ENCODE measurements at regions of chr15 and their contacts with region 1.

Region 1: GRCh38 chr15:90482124-90483011 is 47.4 kb upstream of the CRTC3 start:
- DNase-seq: peak in 7 of 9 donors; percentile 28 to 60 (median 47)
- ATAC-seq: peak; percentile 61
- H3K4me3 ChIP-seq: no peak overlapping the region
- H3K4me3 Mint-ChIP-seq: no peak overlapping the region
- H3K27ac ChIP-seq: no peak overlapping the region
- H3K27ac Mint-ChIP-seq: peak overlapping the region in 4 of 9 donors; percentile 9 to 50 (median 32)
- H3K4me1 ChIP-seq: peaks cover 10 to 11% of the 10 kb centered on the region in 2 donors
- H3K4me1 Mint-ChIP-seq: peaks cover 9 to 44% (median 40%) of the 10 kb centered on the region in 7 donors
- H3K27me3 ChIP-seq: no peaks in the 10 kb centered on the region
- H3K27me3 Mint-ChIP-seq: no peaks in the 10 kb centered on the region

Region 2: GRCh38 chr15:90291679-90292356 is 190.6 kb before region 1 on chr15:
- CTCF ChIA-PET with region 1: interaction called, 10 read pairs
- POLR2A ChIA-PET with region 1: no interaction called
- intact Hi-C with region 1: loop called in 1 of 2 experiments (anchors 1 kb)
- DNase-seq: no peak
- ATAC-seq: no peak
- H3K4me3 ChIP-seq: no peak overlapping the region
- H3K4me3 Mint-ChIP-seq: no peak overlapping the region
- H3K27ac ChIP-seq: no peak overlapping the region
- H3K27ac Mint-ChIP-seq: no peak overlapping the region
- H3K4me1 ChIP-seq: no peaks in the 10 kb centered on the region
- H3K4me1 Mint-ChIP-seq: peaks cover 0 to 19% (median under 1%) of the 10 kb centered on the region in 7 donors
- H3K27me3 ChIP-seq: no peaks in the 10 kb centered on the region
- H3K27me3 Mint-ChIP-seq: peaks cover 0 to 18% (median 4%) of the 10 kb centered on the region in 5 donors

Region 3: DNA sequence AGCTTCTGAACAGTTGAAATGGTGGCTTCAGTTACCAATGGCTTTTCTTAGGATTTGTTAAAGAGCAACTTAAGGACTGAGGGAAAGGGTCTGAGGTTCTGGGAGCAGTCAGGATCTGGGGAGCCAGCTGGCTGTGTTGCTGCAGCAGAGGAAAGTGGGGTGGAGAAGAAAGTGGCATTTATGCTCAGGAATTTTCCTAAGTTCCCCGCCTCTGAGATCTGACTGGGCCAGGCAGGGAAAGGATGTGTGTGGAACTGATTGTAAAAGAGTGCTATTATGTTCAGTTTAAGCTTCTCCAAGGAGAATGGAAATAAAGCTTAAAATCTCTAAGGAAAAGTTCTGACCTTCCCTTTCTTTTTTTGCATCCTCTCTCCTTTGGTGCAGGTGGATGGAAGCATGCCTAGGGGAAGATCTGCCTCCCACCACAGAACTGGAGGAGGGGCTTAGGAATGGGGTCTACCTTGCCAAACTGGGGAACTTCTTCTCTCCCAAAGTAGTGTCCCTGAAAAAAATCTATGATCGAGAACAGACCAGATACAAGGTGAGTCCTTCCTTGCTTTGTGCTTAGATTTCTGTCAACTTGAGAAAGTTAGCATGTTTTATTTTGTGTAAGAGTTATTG is 56.5 kb before region 1 on chr15:
- CTCF ChIA-PET with region 1: interaction called, 6 read pairs
- POLR2A ChIA-PET with region 1: no interaction called
- intact Hi-C with region 1: loop called in 1 of 2 experiments (anchors 5 kb)
- DNase-seq: no peak
- ATAC-seq: no peak
- H3K4me3 ChIP-seq: no peak overlapping the region
- H3K4me3 Mint-ChIP-seq: no peak overlapping the region
- H3K27ac ChIP-seq: no peak overlapping the region
- H3K27ac Mint-ChIP-seq: peak overlapping the region in 4 of 9 donors; percentile 24 to 89 (median 30)
- H3K4me1 ChIP-seq: peaks cover 0 to 5% of the 10 kb centered on the region in 2 donors
- H3K4me1 Mint-ChIP-seq: peaks cover 6 to 47% (median 32%) of the 10 kb centered on the region in 7 donors
- H3K27me3 ChIP-seq: no peaks in the 10 kb centered on the region
- H3K27me3 Mint-ChIP-seq: no peaks in the 10 kb centered on the region

Measured in naive thymus-derived CD4-positive, alpha-beta T cell (primary cell).